ENCODE measurements at regions of chr6 and their contacts with region 1.

Region 1: DNA sequence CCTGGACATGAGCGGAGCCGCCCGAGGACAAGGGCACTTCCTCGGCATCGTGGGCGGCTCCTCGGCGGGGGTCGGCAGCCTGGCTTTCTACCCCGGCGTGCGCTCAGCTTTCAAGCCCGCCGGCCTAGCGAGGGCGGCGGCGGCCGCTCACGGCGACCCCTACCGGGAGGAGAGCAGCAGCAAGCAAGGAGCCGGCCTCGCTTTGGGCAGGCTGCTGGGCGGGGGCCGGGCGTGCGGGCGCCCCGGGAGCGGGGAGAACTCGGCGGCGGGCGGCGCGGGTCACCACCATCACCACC is 6.7 kb downstream of the PRDM13 start:
- DNase-seq: no peak
- H3K4me3 ChIP-seq: peak overlapping the region; percentile 13 to 59 (median 22); a peak in 7 of 8 replicates
- H3K27ac ChIP-seq: no peak overlapping the region
- H3K4me1 ChIP-seq: peaks cover 0 to 25% (median 14%) of the 10 kb centered on the region in 4 experiments; a peak in 5 of 7 replicates
- H3K27me3 ChIP-seq: peaks cover 75 to 100% (median 88%) of the 10 kb centered on the region in 4 experiments
- CTCF ChIP-seq: peak; percentile 49 to 69 (median 51)
- EP300 ChIP-seq: no peak
- POLR2A ChIP-seq: no peak
- RAD21 ChIP-seq: peak in 1 of 2 experiments; percentile 35; a peak in 3 of 4 replicates

Region 2: GRCh38 chr6:99588618-99589289 is 24.6 kb before region 1 on chr6:
- CTCF ChIA-PET with region 1: interaction called, 49 read pairs
- POLR2A ChIA-PET with region 1: interaction called, 5 read pairs
- DNase-seq: peak; percentile 81 to 84
- H3K4me3 ChIP-seq: peak overlapping the region; percentile 25 to 61 (median 38)
- H3K27ac ChIP-seq: no peak overlapping the region
- H3K4me1 ChIP-seq: peaks cover 0 to 6% (median 2%) of the 10 kb centered on the region in 4 experiments; a peak in 4 of 7 replicates
- H3K27me3 ChIP-seq: peaks cover 56 to 90% (median 76%) of the 10 kb centered on the region in 4 experiments
- CTCF ChIP-seq: peak; percentile 70 to 78 (median 76)
- EP300 ChIP-seq: no peak
- POLR2A ChIP-seq: no peak
- RAD21 ChIP-seq: peak; percentile 81 to 85

Measured in H1 (cell line).